ENCODE measurements at regions of chr15 and their contacts with region 1.

Region 1: GRCh38 chr15:90265271-90266060 is at the start of gene NGRN:
- DNase-seq: peak; percentile 98
- H3K4me3 Mint-ChIP-seq: peak within 1 kb of the TSS; percentile 94
- H3K27ac Mint-ChIP-seq: peak within 1 kb of the TSS; percentile 97
- H3K4me1 Mint-ChIP-seq: peaks cover 33% of the 10 kb centered on the region
- H3K27me3 Mint-ChIP-seq: no peaks in the 10 kb centered on the region
- total RNA-seq, gene NGRN: 43.2 and 44.3 TPM in 2 replicates

Region 2: DNA sequence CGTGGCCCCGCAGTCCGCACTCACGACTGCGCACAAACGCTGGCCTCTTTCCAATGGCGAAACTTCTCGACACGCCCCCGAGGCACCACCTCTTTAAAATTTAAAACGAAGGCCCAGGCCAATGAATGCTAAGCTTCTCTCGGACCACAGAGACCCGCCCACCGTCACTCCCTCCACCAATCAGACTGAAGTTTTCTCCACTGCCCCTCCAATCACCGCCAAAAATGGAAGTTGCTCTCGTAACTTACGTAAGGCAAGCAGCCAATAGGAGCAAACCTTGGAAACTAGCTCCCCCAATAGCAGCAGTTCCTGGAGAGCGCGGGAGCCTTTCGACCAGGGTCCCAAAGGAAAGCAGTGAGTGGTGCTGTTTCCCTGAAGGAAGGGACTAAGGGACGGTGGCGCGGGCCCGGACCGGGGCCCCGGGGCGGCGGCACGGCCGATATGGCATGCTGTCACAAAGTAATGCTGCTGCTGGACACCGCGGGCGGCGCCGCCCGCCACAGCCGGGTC is 690.3 kb before region 1 on chr15 and contains the start of gene TICRR:
- intact Hi-C with region 1: loop called (anchors 5 kb)
- DNase-seq: peak; percentile 99
- H3K4me3 Mint-ChIP-seq: peak within 1 kb of the TSS; percentile 91
- H3K27ac Mint-ChIP-seq: peak within 1 kb of the TSS; percentile 88
- H3K4me1 Mint-ChIP-seq: peaks cover 29% of the 10 kb centered on the region
- H3K27me3 Mint-ChIP-seq: peaks cover 22% of the 10 kb centered on the region
- total RNA-seq, gene TICRR: 18.8 and 21.0 TPM in 2 replicates

Region 3: GRCh38 chr15:90249203-90249863 is 16.1 kb before region 1 on chr15 and contains the start of gene TTLL13:
- intact Hi-C with region 1: loop called (anchors 2 kb)
- DNase-seq: peak; percentile 96
- H3K4me3 Mint-ChIP-seq: peak within 1 kb of the TSS; percentile 80
- H3K27ac Mint-ChIP-seq: no peak within 1 kb of the TSS
- H3K4me1 Mint-ChIP-seq: peaks cover 8% of the 10 kb centered on the region
- H3K27me3 Mint-ChIP-seq: no peaks in the 10 kb centered on the region
- total RNA-seq, gene TTLL13: 0.44 and 1.4 TPM in 2 replicates

Region 4: GRCh38 chr15:91040856-91041255 is 775.4 kb after region 1 on chr15:
- intact Hi-C with region 1: no loop called
- DNase-seq: no peak
- H3K4me3 Mint-ChIP-seq: no peak overlapping the region
- H3K27ac Mint-ChIP-seq: no peak overlapping the region
- H3K4me1 Mint-ChIP-seq: peaks cover 6% of the 10 kb centered on the region
- H3K27me3 Mint-ChIP-seq: peaks cover 18% of the 10 kb centered on the region